Right ventricle myocardium inferior (tissue), 1 donor: ENCODE measurements at regions of chr15 and their contacts with region 1.

Region 1: DNA sequence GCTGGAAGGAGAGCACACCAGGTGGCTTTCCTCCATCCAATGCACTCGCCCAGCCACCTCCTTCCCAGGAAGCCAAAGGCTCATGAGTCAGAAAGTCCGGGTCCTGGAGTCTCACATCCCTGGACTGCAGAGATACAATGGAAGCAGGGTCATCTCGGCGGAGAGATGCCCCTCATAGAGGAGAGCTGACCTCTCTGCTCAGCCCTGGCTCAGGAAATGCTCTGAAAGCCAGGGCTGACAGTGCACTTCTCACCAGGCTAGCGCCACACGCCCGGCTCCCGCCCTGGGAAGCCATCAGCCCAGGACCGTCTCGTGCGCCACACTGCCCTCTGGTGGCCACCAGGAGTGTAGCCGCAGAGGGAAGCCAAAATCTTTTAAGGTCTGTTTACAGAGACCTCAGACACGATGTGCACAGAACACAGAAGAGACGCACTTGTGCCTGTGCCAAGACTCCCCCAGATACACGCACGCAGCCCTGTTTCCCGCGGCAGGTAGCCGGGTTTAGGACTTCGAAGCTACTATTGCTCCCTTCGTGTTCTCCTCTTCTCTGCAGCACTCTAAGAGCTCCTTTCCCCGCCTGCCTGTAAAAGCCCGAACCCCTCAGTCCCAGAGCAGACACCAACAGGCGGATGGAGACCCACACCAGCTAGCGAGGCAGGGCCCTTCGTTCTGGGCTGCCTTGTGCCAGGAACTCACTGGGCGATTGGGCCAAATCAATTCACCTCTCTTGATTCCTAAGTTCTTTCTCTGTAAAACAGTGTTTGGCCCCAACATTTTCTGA is 9.7 kb downstream of the NTRK3 start:
- DNase-seq: peak; percentile 89
- ATAC-seq: peak; percentile 84

Region 2: DNA sequence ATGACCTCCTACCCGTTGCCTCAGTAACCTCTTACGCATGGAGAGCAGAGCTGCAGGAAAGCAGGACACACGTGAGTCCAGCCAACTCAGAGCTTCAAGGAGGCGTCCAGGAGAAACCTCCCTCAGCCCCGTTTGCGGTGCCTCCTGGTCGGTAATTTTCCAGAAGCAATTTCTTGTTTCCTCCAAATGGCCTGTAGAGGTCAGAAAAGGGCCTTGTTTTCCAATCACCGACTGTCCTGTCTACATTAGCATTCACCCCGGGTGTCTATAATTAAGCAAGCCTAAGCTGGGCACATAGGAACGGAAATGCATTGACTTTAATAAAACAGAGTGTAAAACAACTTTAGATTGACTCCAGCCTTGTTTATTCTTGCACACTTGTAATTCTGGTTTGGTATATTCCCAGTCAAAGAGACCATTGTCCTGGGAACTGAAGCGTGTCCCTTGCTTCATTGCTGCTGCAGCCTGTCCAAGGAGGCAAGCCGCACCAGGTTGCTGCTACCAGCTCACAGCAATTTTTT is 1331.0 kb before region 1 on chr15:
- intact Hi-C with region 1: loop called (anchors 10 kb)
- DNase-seq: no peak
- ATAC-seq: peak; percentile 63

Region 3: DNA sequence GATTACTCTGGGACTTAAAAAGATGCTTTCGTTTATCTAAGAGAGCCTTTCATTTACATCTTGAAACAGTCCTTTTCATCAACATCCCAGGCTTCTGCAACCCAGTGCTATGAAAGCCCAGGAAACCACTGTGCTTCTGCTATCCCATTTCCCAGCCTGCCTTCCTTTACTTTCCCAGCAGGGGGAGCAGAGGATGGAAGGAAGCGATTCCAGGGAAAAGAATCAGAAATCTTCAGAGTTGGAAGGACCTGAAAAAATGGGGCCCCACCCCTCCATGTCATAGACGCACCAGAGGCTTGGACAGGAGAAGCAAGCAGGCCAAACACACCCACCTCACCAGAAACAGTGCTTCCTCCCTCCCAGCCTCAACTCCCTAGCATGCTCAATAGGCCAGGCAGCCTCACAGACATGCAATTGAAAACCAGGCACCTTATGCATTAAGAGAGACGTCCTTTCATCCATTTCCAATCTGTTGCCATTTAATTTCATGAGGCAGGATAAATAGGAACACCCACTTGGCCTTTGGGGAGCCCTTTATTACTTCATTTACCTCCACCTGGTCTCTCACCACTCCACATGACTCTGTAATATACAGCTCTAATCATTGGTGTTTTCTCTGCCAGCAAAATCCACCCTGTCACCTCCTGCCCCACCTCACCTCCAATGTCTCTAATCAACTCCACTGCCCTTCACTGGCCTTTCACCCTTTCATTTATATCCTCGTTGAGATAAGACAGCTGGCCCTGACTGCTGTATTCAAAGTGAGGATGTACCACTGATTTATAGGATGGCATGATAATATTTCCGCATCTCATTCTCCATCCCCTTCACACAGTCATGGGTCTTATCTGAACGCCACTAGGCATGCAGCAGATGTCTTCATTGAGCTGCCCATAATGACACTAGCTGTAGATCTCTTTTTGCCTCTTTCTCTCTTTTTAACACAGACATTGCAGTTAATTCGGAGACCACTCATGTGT is 574.3 kb before region 1 on chr15:
- intact Hi-C with region 1: loop called (anchors 5 kb)
- DNase-seq: no peak
- ATAC-seq: no peak

Region 4: DNA sequence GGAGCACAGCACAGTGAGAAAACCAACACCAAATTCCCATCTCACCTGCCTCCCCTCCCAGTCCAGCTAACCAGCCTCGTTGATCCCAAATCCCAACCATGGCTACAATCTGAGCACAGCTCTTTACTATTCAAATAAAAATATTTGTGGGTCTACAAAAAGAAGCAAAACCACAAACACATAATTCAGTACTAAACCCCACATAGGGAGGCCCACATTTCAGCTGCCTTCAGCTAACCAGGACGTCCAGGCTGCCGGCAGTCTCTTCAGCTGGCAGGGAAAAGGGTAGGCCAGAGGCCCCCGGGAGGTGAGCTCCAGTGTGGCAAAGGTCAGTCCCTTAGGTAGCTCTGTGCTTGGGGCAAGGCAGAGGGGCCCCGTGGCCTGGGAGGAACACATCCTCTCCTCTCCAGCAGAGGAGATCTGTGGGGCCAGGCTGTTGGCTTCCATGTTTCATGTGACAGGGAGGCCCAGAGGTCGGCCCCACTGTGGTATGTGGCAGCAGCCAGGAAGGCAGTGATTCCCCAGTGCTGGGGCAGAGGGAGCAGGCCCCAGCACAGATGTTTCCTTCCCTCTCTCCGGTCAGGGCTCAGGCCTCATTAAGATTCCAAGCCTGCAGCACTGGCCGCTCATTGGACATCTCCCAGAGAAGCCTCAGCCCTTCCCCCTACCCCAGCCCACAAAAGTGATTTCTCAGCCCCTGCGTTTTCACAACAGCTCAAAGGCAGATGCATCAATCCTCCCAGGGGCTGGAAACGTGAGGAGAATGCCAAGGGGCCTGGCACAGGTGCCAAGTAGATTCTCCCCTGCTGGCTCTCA is 371.8 kb before region 1 on chr15:
- intact Hi-C with region 1: loop called (anchors 10 kb)
- DNase-seq: no peak
- ATAC-seq: peak; percentile 61

Region 5: DNA sequence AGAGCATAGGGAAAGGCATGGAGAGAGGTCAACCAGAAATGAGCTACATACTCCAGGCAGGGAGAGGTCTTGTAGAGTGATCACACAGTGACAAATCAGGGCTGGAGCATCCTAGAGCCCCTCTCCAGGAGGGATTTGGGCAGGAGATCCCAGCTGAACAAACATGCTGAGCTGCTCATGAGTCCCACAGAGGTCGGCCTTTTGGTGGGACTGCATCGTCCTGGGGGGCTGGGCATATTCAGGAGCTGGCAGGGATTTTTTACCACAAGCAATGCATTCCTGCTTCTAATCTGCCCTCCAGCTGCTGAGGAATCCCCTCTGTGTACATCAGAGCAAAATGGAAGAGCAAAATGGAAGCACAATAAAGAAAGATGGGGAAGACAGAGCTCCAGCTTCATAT is 85.2 kb before region 1 on chr15:
- intact Hi-C with region 1: no loop called
- DNase-seq: no peak
- ATAC-seq: no peak